ENCODE measurements at regions of chr6 and their contacts with region 1.

Region 1: GRCh38 chr6:111011360-111012142 is 29.7 kb downstream of the RPF2 start:
- DNase-seq: peak in 7 of 9 donors; percentile 18 to 58 (median 50)
- ATAC-seq: peak; percentile 71
- H3K4me3 ChIP-seq: no peak overlapping the region
- H3K4me3 Mint-ChIP-seq: no peak overlapping the region
- H3K27ac ChIP-seq: no peak overlapping the region
- H3K27ac Mint-ChIP-seq: peak overlapping the region in 1 of 9 donors; percentile 16
- H3K4me1 ChIP-seq: no peaks in the 10 kb centered on the region
- H3K4me1 Mint-ChIP-seq: peaks cover 3 to 13% (median 5%) of the 10 kb centered on the region in 7 donors
- H3K27me3 ChIP-seq: no peaks in the 10 kb centered on the region
- H3K27me3 Mint-ChIP-seq: no peaks in the 10 kb centered on the region

Region 2: DNA sequence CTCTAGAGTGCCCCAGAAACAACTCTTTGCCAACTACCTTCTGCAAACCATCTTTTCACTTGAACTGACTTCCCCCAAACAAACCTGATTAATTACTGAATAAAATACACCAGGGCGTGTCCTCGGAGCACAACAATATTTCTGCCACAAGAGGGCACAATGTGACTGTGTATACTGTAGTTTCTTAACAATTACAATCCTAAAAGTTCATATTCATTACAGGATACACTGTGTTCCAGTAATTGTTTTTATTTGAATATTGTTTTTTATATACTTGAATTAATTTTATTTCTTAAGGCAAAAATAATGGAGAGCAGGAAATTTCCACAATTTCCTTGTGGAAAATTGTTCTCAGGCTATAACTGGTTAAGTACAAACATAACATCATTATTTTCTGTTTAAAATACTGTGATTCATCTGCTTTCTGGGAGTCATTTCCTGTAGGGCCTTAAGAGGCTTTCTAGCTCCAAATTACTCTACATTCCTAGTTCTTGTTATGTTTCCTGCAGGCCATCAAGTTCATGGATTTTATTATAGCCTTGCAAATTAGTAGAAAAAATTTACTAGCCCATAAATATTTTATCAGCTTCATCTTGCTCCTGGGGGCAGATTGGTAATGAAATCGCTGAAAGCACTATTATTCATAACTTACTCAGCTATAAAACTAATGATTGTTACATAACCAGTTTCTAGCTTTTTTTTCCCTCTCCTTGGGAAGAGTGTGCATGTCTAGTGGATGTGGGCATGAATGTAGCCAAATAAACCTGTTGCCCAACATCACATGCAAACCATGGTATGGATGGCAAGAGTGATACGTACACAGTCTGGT is 483.2 kb before region 1 on chr6:
- CTCF ChIA-PET with region 1: no interaction called
- POLR2A ChIA-PET with region 1: no interaction called
- intact Hi-C with region 1: loop called in 1 of 2 experiments (anchors 2 kb)
- DNase-seq: peak in 7 of 9 donors; percentile 15 to 61 (median 47)
- ATAC-seq: peak; percentile 83
- H3K4me3 ChIP-seq: no peak overlapping the region
- H3K4me3 Mint-ChIP-seq: no peak overlapping the region
- H3K27ac ChIP-seq: no peak overlapping the region
- H3K27ac Mint-ChIP-seq: peak overlapping the region in 1 of 9 donors; percentile 21
- H3K4me1 ChIP-seq: no peaks in the 10 kb centered on the region
- H3K4me1 Mint-ChIP-seq: peaks cover 0 to 10% (median 0%) of the 10 kb centered on the region in 7 donors
- H3K27me3 ChIP-seq: no peaks in the 10 kb centered on the region
- H3K27me3 Mint-ChIP-seq: peaks cover 0 to 11% (median 0%) of the 10 kb centered on the region in 5 donors

Region 3: DNA sequence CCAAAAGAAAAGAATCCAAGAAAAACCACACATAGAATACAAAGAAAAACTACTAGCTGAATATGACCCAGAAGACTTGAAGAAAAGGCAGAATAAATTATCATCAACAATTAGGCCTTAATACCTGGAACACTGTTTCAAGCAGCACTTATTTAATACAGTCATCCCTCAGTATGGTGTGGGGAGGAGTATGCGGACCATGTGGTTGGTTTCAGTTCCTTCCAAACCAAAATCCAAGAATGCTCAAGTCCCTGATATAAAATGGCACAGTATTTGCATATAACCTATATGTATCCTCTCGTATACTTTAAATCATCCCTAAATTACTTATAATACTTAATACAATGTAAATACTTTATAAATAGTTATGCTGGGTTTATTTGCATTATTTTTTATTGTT is 212.4 kb before region 1 on chr6:
- CTCF ChIA-PET with region 1: no interaction called
- POLR2A ChIA-PET with region 1: no interaction called
- intact Hi-C with region 1: no loop called
- DNase-seq: no peak
- ATAC-seq: no peak
- H3K4me3 ChIP-seq: no peak overlapping the region
- H3K4me3 Mint-ChIP-seq: no peak overlapping the region
- H3K27ac ChIP-seq: no peak overlapping the region
- H3K27ac Mint-ChIP-seq: no peak overlapping the region
- H3K4me1 ChIP-seq: no peaks in the 10 kb centered on the region
- H3K4me1 Mint-ChIP-seq: peaks cover 14 to 28% (median 24%) of the 10 kb centered on the region in 7 donors
- H3K27me3 ChIP-seq: no peaks in the 10 kb centered on the region
- H3K27me3 Mint-ChIP-seq: no peaks in the 10 kb centered on the region

Region 4: DNA sequence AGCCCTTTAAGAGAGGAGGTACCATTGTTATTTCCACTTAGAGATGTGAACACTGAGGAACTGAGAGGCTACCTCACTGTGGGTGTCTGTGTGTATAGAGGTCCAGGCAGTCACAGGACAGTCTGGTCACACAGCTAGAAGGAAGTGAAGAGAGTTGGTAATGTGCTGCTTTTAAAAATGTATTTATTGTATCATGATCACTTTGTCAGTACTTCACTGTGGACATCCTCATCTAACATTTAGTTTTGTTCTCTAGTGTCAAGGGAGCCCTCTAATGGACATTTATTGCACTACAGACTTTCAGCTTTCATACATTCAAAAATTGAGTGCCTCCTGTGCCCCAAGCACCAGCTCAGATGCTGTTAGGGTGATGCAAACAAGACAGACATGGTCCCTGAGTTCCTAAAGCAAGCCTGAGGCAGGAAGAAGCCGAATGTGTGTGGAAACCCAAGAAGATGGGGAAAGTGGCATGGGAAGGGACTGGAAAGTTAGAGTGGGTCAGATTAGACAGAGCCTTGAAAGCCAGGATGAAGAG is 198.7 kb after region 1 on chr6:
- CTCF ChIA-PET with region 1: interaction called, 16 read pairs
- POLR2A ChIA-PET with region 1: interaction called, 7 read pairs
- intact Hi-C with region 1: loop called (anchors 1 kb)
- DNase-seq: peak in 7 of 9 donors; percentile 46 to 73 (median 63)
- ATAC-seq: peak; percentile 88
- H3K4me3 ChIP-seq: no peak overlapping the region
- H3K4me3 Mint-ChIP-seq: no peak overlapping the region
- H3K27ac ChIP-seq: no peak overlapping the region
- H3K27ac Mint-ChIP-seq: peak overlapping the region in 1 of 9 donors; percentile 8
- H3K4me1 ChIP-seq: no peaks in the 10 kb centered on the region
- H3K4me1 Mint-ChIP-seq: peaks cover 0 to 18% (median 9%) of the 10 kb centered on the region in 7 donors
- H3K27me3 ChIP-seq: no peaks in the 10 kb centered on the region
- H3K27me3 Mint-ChIP-seq: no peaks in the 10 kb centered on the region

Region 5: DNA sequence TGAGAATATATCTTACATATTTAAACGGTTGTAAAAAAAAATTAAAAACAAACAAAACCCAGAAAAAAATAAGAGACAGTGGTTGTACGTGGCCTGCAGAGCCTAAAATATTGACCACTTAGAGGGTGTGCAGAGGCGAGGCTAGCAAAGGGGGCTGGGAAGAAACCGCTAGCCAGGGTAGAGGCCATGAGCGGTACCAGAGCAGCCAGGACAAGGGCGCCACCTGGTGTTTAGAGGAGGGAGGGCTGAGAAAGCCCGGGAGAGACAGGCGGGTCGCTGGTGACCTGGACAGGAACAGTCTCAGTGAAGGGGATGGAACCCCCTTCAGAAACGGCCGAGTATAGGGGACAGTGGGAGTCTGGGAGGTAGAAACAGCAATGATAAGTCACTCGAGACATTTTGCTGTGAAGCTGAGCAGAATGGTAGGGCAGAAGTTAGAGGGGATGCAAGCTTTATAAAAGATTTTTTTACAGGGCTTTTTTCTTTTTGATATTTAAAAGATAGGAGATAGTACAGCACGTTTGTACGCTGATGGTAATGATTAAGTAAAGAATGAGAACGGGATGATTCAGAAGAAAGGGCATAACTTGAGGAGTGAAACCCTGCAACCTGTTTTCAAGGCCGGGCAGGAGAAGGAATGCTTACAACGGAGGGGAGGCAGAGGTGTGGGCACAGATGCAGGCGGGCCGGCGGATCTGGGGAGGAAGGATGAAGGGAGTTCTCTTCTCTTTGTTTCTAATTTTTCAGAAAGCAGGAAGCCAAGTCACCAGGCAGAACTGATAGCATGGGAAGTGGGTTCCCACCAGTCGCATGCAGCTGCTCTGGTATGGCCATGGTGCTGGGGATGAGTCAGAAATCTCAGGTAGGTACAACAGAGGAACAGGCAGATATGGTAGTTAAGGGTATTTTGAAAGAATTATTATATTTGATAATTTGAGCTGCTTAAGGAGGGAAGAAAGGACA is 1152.0 kb after region 1 on chr6:
- CTCF ChIA-PET with region 1: interaction called, 4 read pairs
- POLR2A ChIA-PET with region 1: no interaction called
- intact Hi-C with region 1: loop called in 1 of 2 experiments (anchors 2 kb)
- DNase-seq: peak; percentile 43 to 81 (median 64)
- ATAC-seq: peak; percentile 97
- H3K4me3 ChIP-seq: no peak overlapping the region
- H3K4me3 Mint-ChIP-seq: peak overlapping the region; percentile 49 to 88 (median 79)
- H3K27ac ChIP-seq: no peak overlapping the region
- H3K27ac Mint-ChIP-seq: peak overlapping the region in 7 of 9 donors; percentile 10 to 79 (median 48)
- H3K4me1 ChIP-seq: peaks cover 3 to 7% of the 10 kb centered on the region in 2 donors
- H3K4me1 Mint-ChIP-seq: peaks cover 9 to 18% (median 14%) of the 10 kb centered on the region in 7 donors
- H3K27me3 ChIP-seq: no peaks in the 10 kb centered on the region
- H3K27me3 Mint-ChIP-seq: peaks cover 25 to 60% (median 48%) of the 10 kb centered on the region in 5 donors

Region 6: GRCh38 chr6:112311950-112312547 is 1300.5 kb after region 1 on chr6:
- CTCF ChIA-PET with region 1: no interaction called
- POLR2A ChIA-PET with region 1: no interaction called
- intact Hi-C with region 1: loop called in 1 of 2 experiments (anchors 10 kb)
- DNase-seq: peak in 5 of 9 donors; percentile 5 to 24 (median 13)
- ATAC-seq: no peak
- H3K4me3 ChIP-seq: no peak overlapping the region
- H3K4me3 Mint-ChIP-seq: no peak overlapping the region
- H3K27ac ChIP-seq: no peak overlapping the region
- H3K27ac Mint-ChIP-seq: no peak overlapping the region
- H3K4me1 ChIP-seq: no peaks in the 10 kb centered on the region
- H3K4me1 Mint-ChIP-seq: no peaks in the 10 kb centered on the region
- H3K27me3 ChIP-seq: peaks cover 0 to 2% of the 10 kb centered on the region in 2 donors
- H3K27me3 Mint-ChIP-seq: peaks cover 15 to 34% (median 26%) of the 10 kb centered on the region in 5 donors